Sigmoid colon (tissue), 7 donors: ENCODE measurements at regions of chr4 and their contacts with region 1.

Region 1: GRCh38 chr4:173505924-173506518 is 24.0 kb downstream of the HAND2 start:
- DNase-seq: peak; percentile 90
- H3K4me3 ChIP-seq: peak overlapping the region in 2 of 4 donors; percentile 58 to 70
- H3K27ac ChIP-seq: peak overlapping the region; percentile 14 to 99 (median 92)
- H3K4me1 ChIP-seq: peaks cover 0 to 56% (median 41%) of the 10 kb centered on the region in 4 donors
- H3K27me3 ChIP-seq: no peaks in the 10 kb centered on the region
- CTCF ChIP-seq: peak; percentile 69 to 71 (median 70)
- EP300 ChIP-seq: no peak
- POLR2A ChIP-seq: no peak

Region 2: DNA sequence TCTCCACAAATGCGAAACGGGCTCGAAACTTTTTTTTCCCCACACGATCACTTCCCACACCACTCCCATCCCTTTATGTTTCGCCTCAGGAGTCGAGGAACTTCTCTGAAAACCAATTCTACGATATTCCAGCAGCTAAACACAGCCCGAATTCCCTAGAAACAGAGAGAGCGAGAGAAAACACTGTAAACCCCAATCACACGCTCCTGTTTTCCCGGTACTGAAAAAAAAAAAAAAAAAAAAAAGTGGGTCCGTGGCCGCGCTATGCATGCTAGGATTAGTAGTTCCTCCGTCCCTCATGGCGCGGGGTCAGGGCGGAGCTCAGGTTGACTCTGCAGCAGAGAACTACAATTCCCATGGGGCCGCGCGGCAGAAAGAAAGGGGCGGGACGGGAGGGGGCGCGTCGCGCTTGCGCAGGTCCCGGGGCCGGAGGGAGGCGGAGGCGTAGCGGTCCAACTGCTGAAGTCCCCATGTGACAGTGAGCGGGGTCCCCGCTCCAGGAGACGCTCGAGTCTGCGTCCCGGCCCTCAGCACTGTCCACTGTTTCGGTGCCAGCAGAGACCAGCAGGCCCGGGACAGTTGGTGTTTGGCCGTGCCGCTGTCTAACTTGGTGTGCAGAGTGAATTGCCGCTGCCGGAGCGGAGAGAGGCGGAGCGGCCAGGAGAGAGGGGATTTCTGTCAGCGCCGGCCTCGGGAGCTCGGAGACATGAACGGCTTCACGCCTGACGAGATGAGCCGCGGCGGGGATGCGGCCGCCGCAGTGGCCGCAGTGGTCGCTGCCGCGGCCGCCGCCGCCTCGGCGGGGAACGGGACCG is 135.3 kb before region 1 on chr4 and contains the start of gene SAP30:
- intact Hi-C with region 1: loop called (anchors 5 kb)
- DNase-seq: peak; percentile 100
- H3K4me3 ChIP-seq: peak within 1 kb of the TSS; percentile 82 to 91 (median 90)
- H3K27ac ChIP-seq: peak within 1 kb of the TSS; percentile 94 to 98 (median 97)
- H3K4me1 ChIP-seq: peaks cover 0 to 52% (median 39%) of the 10 kb centered on the region in 4 donors
- H3K27me3 ChIP-seq: no peaks in the 10 kb centered on the region
- CTCF ChIP-seq: no peak
- EP300 ChIP-seq: peak in 1 of 4 donors; percentile 24
- POLR2A ChIP-seq: peak; percentile 99
- total RNA-seq, gene SAP30: 39.6 to 61.4 (median 53.1) TPM

Region 3: GRCh38 chr4:173547889-173548288 is 41.9 kb after region 1 on chr4:
- intact Hi-C with region 1: no loop called
- DNase-seq: peak; percentile 63
- H3K4me3 ChIP-seq: no peak overlapping the region
- H3K27ac ChIP-seq: no peak overlapping the region
- H3K4me1 ChIP-seq: peaks cover 0 to 27% (median 9%) of the 10 kb centered on the region in 4 donors
- H3K27me3 ChIP-seq: no peaks in the 10 kb centered on the region
- CTCF ChIP-seq: no peak
- EP300 ChIP-seq: no peak
- POLR2A ChIP-seq: no peak

Region 4: DNA sequence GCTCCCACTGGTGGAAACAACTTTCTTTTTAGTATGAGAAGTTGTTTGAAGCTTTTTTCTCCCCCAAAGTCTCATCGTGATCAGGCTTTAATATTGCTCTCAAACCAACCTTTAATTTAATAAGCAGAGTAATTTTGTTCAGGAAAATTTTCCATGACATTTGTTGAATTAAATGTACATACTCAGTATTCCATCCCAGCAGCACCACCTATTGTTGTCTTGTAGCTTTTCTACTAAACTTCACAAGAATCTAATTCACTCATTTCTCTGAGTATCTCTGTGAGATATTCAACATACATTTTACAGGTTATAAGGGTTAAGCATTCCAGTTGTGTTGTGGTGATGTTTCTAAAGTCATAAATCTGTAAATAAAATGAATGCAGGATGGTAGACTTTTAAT is 242.3 kb after region 1 on chr4:
- intact Hi-C with region 1: loop called (anchors 5 kb)
- DNase-seq: no peak
- H3K4me3 ChIP-seq: no peak overlapping the region
- H3K27ac ChIP-seq: peak overlapping the region in 3 of 4 donors; percentile 4 to 42 (median 16)
- H3K4me1 ChIP-seq: peaks cover 0 to 32% (median 17%) of the 10 kb centered on the region in 4 donors
- H3K27me3 ChIP-seq: no peaks in the 10 kb centered on the region
- CTCF ChIP-seq: peak in 1 of 4 experiments; percentile 22
- EP300 ChIP-seq: no peak
- POLR2A ChIP-seq: no peak

Region 5: DNA sequence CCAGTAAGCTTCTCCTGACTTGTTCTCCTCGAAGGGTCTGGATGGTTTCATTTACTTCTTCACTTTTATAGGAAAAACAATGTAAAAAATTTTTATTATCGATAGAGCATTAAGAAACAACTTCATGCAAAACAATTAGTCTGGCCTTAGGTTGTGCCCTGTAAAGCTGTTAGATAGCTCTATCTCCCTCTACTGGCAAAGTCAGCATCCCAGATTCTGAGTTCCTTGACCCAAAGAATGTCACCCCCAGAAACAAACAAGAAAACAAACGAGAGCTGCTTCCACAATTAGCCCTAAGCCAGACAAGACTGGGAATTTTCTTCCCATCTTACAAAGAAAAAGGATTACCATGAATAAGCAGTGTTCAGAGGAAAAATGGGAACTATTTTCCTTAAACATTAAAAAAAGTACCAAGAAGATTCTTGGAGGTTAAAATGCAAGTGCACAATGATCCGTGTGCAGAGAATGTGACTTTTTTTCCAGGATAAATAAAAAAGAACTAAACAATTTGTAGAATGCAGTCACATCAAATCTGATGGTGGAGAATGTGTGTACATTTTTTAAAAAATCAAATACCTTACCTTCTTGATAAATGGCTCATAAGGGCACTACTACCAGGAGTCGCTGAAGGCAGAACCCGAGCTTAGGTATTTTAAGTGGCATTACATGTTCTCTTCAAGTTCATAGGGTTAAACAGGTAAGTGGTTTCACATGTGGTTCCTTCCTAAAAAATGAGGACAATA is 484.3 kb after region 1 on chr4:
- intact Hi-C with region 1: loop called (anchors 5 kb)
- DNase-seq: no peak
- H3K4me3 ChIP-seq: no peak overlapping the region
- H3K27ac ChIP-seq: peak overlapping the region; percentile 43 to 73 (median 63)
- H3K4me1 ChIP-seq: peaks cover 0 to 42% (median 28%) of the 10 kb centered on the region in 4 donors
- H3K27me3 ChIP-seq: no peaks in the 10 kb centered on the region
- CTCF ChIP-seq: peak; percentile 48 to 67 (median 56)
- EP300 ChIP-seq: no peak
- POLR2A ChIP-seq: no peak

Region 6: GRCh38 chr4:174120446-174121295 is 614.6 kb after region 1 on chr4:
- intact Hi-C with region 1: loop called (anchors 2 kb)
- DNase-seq: peak; percentile 74
- H3K4me3 ChIP-seq: peak overlapping the region; percentile 25 to 46 (median 39)
- H3K27ac ChIP-seq: peak overlapping the region; percentile 71 to 82 (median 75)
- H3K4me1 ChIP-seq: peaks cover 0 to 62% (median 45%) of the 10 kb centered on the region in 4 donors
- H3K27me3 ChIP-seq: no peaks in the 10 kb centered on the region
- CTCF ChIP-seq: peak; percentile 40 to 82 (median 66)
- EP300 ChIP-seq: no peak
- POLR2A ChIP-seq: peak in 1 of 2 donors; percentile 28

Region 7: GRCh38 chr4:174318829-174319764 is 813.1 kb after region 1 on chr4:
- intact Hi-C with region 1: loop called (anchors 2 kb)
- DNase-seq: no peak
- H3K4me3 ChIP-seq: no peak overlapping the region
- H3K27ac ChIP-seq: peak overlapping the region in 1 of 4 donors; percentile 17
- H3K4me1 ChIP-seq: peaks cover 0 to 25% (median 0%) of the 10 kb centered on the region in 4 donors
- H3K27me3 ChIP-seq: no peaks in the 10 kb centered on the region
- CTCF ChIP-seq: peak in 3 of 4 experiments; percentile 59 to 79 (median 70)
- EP300 ChIP-seq: no peak
- POLR2A ChIP-seq: no peak